ENCODE measurements at regions of chr15 and their contacts with region 1.

Region 1: GRCh38 chr15:48190932-48191573 is 412 bp upstream of the CTXN2 start:
- H3K4me3 Mint-ChIP-seq: no peak overlapping the region
- H3K27ac Mint-ChIP-seq: no peak overlapping the region
- H3K4me1 Mint-ChIP-seq: peaks cover 11% of the 10 kb centered on the region
- H3K27me3 Mint-ChIP-seq: peaks cover 14% of the 10 kb centered on the region

Region 2: DNA sequence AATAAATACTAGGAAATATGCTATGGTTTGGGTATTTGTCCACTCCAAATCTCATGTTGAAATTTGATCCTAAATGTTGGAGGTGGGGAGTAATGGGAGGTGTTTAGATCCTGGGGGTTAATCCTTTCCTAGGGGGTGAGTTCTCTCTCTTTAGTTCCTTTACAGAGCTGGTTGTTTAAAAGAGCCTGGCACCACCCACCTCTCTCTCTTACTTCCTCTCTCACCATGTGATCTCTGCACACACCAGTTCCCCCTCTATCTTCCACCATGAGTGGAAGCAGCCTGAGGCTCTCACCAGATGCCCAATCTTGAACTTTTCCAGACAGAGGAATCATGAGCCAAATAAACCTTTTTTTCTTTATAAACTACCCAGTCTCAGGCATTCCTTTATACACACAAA is 59.7 kb before region 1 on chr15:
- intact Hi-C with region 1: loop called (anchors 10 kb)
- H3K4me3 Mint-ChIP-seq: no peak overlapping the region
- H3K27ac Mint-ChIP-seq: no peak overlapping the region
- H3K4me1 Mint-ChIP-seq: no peaks in the 10 kb centered on the region
- H3K27me3 Mint-ChIP-seq: no peaks in the 10 kb centered on the region